ENCODE measurements at regions of chr6 and their contacts with region 1.

Region 1: DNA sequence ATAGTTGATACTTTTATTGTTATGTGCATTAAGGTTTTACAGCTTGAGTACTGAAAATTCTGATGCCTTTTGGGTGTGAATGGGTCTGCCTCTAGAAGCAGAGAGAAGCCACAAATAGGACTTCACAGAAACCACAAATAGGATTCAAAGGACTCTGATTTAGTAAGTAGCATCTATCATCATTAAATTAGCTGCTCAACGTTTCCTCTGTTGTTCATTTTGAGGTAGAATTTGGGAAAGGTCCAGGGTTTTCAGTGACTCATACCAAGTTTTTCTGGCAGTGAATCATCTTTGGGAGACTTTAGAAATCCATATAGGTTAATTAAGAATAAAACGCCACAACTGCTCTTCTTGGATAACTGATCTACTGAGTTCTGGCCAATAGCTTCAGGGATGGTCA is 105.1 kb downstream of the PHF3 start:
- DNase-seq: no peak
- ATAC-seq: no peak
- H3K4me3 ChIP-seq: no peak overlapping the region
- H3K4me3 Mint-ChIP-seq: no peak overlapping the region
- H3K27ac ChIP-seq: no peak overlapping the region
- H3K27ac Mint-ChIP-seq: no peak overlapping the region
- H3K4me1 ChIP-seq: no peaks in the 10 kb centered on the region
- H3K4me1 Mint-ChIP-seq: peaks cover 0 to 5% (median 0%) of the 10 kb centered on the region in 7 donors
- H3K27me3 ChIP-seq: no peaks in the 10 kb centered on the region
- H3K27me3 Mint-ChIP-seq: no peaks in the 10 kb centered on the region

Region 2: GRCh38 chr6:63685446-63686379 is 55.0 kb before region 1 on chr6:
- CTCF ChIA-PET with region 1: no interaction called
- POLR2A ChIA-PET with region 1: no interaction called
- intact Hi-C with region 1: loop called in 1 of 2 experiments (anchors 10 kb)
- DNase-seq: no peak
- ATAC-seq: peak; percentile 65
- H3K4me3 ChIP-seq: no peak overlapping the region
- H3K4me3 Mint-ChIP-seq: peak overlapping the region in 1 of 10 donors; percentile 9
- H3K27ac ChIP-seq: no peak overlapping the region
- H3K27ac Mint-ChIP-seq: peak overlapping the region in 7 of 9 donors; percentile 2 to 84 (median 40)
- H3K4me1 ChIP-seq: no peaks in the 10 kb centered on the region
- H3K4me1 Mint-ChIP-seq: peaks cover 32 to 64% (median 50%) of the 10 kb centered on the region in 7 donors
- H3K27me3 ChIP-seq: no peaks in the 10 kb centered on the region
- H3K27me3 Mint-ChIP-seq: no peaks in the 10 kb centered on the region

Measured in naive thymus-derived CD4-positive, alpha-beta T cell (primary cell).